ENCODE measurements at regions of chr4 and their contacts with region 1.

Region 1: GRCh38 chr4:163554870-163555465 is 60.5 kb downstream of the TMA16 start:
- DNase-seq: no peak
- ATAC-seq: no peak

Region 2: GRCh38 chr4:163356104-163356503 is 198.9 kb before region 1 on chr4:
- intact Hi-C with region 1: no loop called
- DNase-seq: no peak
- ATAC-seq: no peak

Region 3: DNA sequence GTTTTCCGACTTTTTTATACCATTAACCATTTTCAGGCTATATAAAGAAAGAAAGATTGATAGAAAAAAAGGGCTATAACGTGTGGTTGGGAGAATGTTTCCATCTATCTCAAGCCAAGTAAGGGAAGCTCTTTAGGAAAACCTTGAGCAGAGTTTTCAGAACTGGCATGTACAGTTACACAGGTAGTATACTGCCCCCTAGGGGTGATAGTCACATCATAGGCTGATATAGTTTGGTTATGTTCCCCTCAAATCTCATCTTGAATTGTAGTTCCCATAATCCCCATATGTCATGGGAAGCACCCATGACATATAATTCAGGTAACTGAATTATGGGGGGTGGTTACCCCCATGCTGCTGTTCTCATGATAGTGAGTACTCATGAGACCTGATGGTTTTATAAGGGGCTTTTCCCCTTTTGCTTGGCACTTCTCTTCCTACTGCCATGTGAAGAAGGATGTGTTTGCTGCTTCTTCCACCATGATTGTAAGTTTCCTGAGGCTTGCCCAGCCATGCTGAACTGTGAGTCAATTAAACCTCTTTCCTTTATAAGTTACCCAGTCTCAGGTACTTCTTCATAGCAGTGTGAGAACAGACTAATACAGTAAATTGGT is 126.3 kb after region 1 on chr4:
- intact Hi-C with region 1: loop called (anchors 5 kb)
- DNase-seq: no peak
- ATAC-seq: no peak

Region 4: DNA sequence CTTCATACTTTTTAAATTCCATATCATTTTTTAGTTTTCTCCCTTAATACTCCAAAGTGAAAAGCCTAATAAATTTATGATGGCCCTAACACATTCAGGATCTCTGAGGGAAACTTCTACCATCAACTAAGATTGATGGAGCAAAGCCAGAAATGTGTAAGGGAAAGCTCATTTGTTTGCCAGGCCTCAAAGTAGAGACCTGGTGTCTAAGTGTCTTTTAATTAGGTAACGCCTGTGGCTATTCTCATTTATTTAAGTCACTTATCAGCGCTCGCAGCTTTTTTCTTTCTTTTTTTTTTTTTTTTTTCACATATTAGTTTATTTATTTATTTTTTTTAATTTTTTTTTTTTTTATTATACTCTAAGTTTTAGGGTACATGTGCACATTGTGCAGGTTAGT is 181.9 kb after region 1 on chr4:
- intact Hi-C with region 1: no loop called
- DNase-seq: no peak
- ATAC-seq: no peak

Region 5: DNA sequence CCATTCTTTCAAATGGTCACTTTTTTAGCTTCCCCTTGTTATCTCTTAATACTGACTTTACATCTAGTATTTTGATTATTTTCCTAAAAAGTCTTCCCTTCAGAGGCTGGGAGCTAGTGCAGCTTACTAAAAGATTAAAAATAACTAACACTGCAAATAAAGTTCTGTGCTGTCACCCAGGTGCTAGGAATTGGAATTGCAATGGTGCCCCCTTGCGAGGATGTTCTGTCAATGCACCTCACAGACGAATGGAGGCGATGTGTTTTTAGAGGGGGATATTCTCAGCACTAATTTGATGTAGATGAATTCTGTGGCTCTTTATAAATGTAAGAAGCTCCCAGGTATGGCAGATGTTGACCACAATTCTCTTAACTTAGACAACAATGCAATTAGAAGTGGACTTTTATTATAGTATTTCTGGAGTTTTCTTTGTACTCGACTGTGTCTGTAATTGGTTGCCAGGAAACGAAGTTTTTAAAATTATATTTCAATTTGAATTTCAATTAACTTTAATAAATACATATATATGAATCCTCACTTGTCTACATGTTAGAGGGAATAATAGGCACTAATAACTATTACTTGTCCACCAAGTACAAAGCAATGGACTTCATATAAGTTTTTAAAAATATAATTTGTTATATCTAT is 1177.0 kb after region 1 on chr4:
- intact Hi-C with region 1: loop called (anchors 2 kb)
- DNase-seq: no peak
- ATAC-seq: peak; percentile 56

Region 6: DNA sequence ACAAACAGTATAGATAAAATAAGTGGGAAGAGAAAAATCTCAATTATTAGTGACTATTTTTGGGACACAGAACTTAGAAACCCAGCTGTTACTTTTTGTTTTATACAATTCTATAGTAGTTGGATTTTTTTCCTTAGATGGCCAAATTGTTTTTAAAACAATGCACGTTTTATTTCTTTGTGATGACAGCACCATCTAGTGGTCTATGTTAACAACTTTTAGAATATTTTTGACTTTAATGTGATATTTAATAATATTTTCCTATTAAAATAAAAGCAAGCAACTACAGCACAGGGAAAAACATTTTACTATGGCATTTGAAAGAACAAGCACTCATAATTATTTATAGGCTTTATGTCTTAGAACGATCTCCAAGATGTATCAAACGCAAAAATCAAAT is 1193.4 kb after region 1 on chr4:
- intact Hi-C with region 1: loop called (anchors 5 kb)
- DNase-seq: no peak
- ATAC-seq: no peak

Measured in Right ventricle myocardium inferior (tissue), 1 donor.